ENCODE measurements at regions of chr1 and their contacts with region 1.

Region 1: DNA sequence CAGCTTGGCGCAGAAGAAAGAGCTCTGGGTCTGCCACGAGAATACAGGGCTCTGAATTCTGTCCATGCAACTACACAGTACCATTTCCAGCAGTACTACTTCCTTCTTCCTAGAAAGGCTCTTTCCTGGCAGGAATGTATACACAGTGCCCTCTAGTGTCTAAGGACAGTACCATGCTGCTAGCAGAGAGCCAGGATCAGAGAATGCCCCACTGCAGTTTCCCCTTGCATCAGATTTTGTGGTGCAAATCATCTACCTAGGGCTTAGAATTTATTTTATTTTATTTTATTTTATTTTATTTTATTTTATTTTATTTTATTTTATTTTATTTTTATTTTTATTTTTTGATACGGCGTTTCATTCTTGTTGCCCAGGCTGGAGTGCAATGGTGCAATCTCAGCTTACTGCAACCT is 50.8 kb downstream of the PAX7 start:
- DNase-seq: peak; percentile 11
- ATAC-seq: no peak
- H3K4me3 Mint-ChIP-seq: no peak overlapping the region
- H3K27ac Mint-ChIP-seq: no peak overlapping the region
- H3K4me1 Mint-ChIP-seq: peaks cover 3% of the 10 kb centered on the region
- H3K27me3 Mint-ChIP-seq: peaks cover 3% of the 10 kb centered on the region
- CTCF ChIP-seq: peak; percentile 81

Region 2: GRCh38 chr1:18668796-18669404 is 12.5 kb before region 1 on chr1:
- CTCF ChIA-PET with region 1: interaction called, 15 read pairs
- POLR2A ChIA-PET with region 1: no interaction called
- intact Hi-C with region 1: no loop called
- DNase-seq: no peak
- ATAC-seq: no peak
- H3K4me3 Mint-ChIP-seq: no peak overlapping the region
- H3K27ac Mint-ChIP-seq: no peak overlapping the region
- H3K4me1 Mint-ChIP-seq: peaks cover 13% of the 10 kb centered on the region
- H3K27me3 Mint-ChIP-seq: no peaks in the 10 kb centered on the region
- CTCF ChIP-seq: no peak

Region 3: DNA sequence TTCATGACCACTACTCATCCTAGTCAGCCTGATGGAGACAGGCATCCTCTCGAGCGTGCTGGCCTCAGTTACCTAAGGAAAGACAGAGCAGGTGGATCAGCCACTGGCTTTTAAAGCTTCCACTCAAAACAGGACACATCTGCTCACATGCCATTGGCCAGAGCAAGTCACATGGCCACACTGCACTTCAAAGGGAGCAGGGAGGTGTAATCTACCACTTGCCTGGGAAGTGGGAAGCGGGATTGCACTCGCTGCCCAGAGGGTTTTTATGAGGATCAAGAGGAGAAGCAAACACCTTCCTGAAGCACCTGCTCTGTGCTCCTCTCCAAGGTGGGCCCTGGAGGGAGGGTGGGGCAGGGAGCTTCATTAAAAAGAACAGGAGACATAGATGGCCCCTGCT is 70.0 kb after region 1 on chr1:
- CTCF ChIA-PET with region 1: no interaction called
- POLR2A ChIA-PET with region 1: no interaction called
- intact Hi-C with region 1: no loop called
- DNase-seq: no peak
- ATAC-seq: no peak
- H3K4me3 Mint-ChIP-seq: no peak overlapping the region
- H3K27ac Mint-ChIP-seq: no peak overlapping the region
- H3K4me1 Mint-ChIP-seq: no peaks in the 10 kb centered on the region
- H3K27me3 Mint-ChIP-seq: peaks cover 23% of the 10 kb centered on the region
- CTCF ChIP-seq: no peak